ENCODE measurements at regions of chr4 and their contacts with region 1.

Region 1: DNA sequence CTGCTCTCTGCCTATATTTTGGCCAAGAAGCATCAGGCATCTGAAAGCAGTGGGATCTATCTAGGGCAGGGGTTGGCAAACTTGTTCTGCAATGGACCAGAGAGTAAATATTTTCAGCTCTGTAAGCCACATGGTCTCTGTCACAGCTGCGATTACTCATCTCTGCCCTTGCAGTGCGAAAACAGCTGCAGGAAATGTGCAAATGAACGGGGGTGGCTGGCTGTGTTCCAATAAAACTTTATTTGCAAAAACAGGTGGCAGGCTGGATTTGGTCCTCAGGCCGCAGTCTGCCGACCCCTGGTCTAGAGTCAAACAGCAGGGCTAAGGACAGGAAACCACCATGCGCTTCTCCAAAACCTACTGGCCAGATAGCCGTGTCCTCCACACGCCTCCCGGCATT is 48.6 kb downstream of the ACOX3 start:
- DNase-seq: peak; percentile 89
- H3K4me3 ChIP-seq: peak overlapping the region; percentile 12
- H3K27ac ChIP-seq: peak overlapping the region; percentile 79
- H3K4me1 ChIP-seq: peaks cover 32% of the 10 kb centered on the region
- CTCF ChIP-seq: no peak

Region 2: DNA sequence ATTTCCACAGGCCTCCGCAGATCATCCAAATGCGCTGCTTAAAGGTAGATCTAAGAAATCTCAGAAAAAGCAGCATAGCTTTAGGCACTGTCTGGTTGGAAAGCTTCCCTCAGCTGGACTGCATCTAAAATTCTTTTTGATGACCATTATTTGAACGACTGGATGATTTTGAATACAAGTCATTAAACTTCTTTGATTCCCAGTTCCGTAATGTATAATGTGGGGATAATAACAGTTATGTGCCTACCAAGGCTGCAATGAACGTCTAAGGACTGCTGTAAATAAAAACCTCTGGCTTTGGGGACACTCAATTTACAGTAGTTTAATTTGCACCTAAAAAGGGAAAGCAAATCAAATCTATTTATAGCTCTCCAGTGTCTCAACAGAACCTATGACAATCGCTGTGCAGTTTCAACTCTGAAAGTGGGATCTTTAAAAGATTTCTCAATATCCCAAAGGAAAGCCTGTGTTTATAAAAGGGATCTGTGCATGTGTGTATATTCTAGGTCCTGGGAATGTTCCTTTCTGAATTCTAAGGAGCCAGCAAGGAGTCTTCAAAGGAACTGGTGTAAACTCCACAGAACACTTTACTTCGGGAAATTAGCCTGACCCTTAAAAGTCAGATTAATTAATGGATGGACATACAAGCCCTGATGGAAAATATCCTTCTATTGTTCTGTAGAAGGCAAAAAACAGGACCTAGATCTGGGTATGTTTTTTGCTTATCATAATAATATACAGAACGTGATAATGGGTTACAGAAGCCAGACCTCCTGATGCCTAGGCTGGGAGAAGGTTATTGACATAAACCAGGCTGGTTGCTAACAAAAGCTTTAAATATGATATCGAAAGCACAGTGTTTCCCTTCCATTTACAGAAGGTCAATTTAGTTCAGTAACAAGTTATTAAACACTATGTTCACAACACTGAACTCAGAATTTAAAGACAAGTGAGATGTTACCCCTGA is 505.7 kb before region 1 on chr4:
- CTCF ChIA-PET with region 1: no interaction called
- POLR2A ChIA-PET with region 1: no interaction called
- intact Hi-C with region 1: no loop called
- DNase-seq: no peak
- H3K4me3 ChIP-seq: no peak overlapping the region
- H3K27ac ChIP-seq: no peak overlapping the region
- H3K4me1 ChIP-seq: no peaks in the 10 kb centered on the region
- CTCF ChIP-seq: no peak

Region 3: GRCh38 chr4:8198906-8199593 is 192.9 kb before region 1 on chr4 and contains the start of gene SH3TC1:
- CTCF ChIA-PET with region 1: no interaction called
- POLR2A ChIA-PET with region 1: no interaction called
- intact Hi-C with region 1: loop called (anchors 1 kb)
- DNase-seq: peak; percentile 82
- H3K4me3 ChIP-seq: peak within 1 kb of the TSS; percentile 67
- H3K27ac ChIP-seq: peak within 1 kb of the TSS; percentile 51
- H3K4me1 ChIP-seq: peaks cover 53% of the 10 kb centered on the region
- CTCF ChIP-seq: no peak
- total RNA-seq, gene SH3TC1: 15.3 and 17.5 TPM in 2 replicates

Region 4: DNA sequence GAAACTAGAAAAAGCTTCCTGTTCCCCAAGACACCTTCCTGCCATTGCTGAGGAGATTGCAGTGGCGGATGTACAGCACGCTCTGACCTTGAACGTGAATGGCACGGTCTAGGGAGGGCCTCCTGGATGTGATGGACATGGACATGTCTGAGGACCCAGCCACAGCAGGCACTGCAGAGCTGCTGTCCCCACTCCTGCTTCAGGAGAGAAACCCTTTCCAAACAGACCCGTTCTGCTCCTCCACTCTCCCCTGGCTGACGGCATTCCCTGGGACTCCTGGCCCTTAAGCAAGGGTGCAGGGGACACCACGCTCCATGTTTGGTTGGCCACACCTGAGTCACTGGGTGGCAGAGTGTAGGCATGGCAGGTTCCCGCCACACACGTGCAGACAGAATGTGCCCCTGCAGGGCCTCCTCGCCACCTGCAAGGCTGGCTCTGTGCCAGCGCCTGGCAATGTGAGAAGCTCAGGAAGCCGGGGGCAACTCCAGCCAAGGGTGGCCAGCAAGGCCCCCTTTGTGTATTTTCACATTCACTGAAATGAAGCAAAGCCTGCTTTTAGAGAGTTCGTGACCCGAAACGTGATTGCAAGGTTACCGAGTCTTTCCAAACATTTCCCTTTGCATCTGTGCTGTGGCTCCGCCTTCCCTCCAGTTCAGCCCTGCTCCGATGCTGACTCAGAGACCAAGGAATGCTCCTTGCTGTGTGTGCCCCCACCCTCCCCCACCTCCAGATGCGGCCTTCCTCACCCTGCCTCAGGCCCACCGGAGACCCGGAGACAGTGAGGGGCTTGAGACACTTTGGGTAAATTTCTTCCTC is 76.3 kb before region 1 on chr4:
- CTCF ChIA-PET with region 1: interaction called, 3 read pairs
- POLR2A ChIA-PET with region 1: interaction called, 3 read pairs
- intact Hi-C with region 1: loop called (anchors 2 kb)
- DNase-seq: peak; percentile 66
- H3K4me3 ChIP-seq: no peak overlapping the region
- H3K27ac ChIP-seq: no peak overlapping the region
- H3K4me1 ChIP-seq: peaks cover 31% of the 10 kb centered on the region
- CTCF ChIP-seq: no peak

Region 5: GRCh38 chr4:8362483-8362882 is 29.5 kb before region 1 on chr4:
- CTCF ChIA-PET with region 1: no interaction called
- POLR2A ChIA-PET with region 1: interaction called, 11 read pairs
- intact Hi-C with region 1: no loop called
- DNase-seq: no peak
- H3K4me3 ChIP-seq: no peak overlapping the region
- H3K27ac ChIP-seq: no peak overlapping the region
- H3K4me1 ChIP-seq: no peaks in the 10 kb centered on the region
- CTCF ChIP-seq: no peak

Region 6: GRCh38 chr4:8795774-8796495 is 404.0 kb after region 1 on chr4:
- CTCF ChIA-PET with region 1: no interaction called
- POLR2A ChIA-PET with region 1: no interaction called
- intact Hi-C with region 1: no loop called
- DNase-seq: no peak
- H3K4me3 ChIP-seq: no peak overlapping the region
- H3K27ac ChIP-seq: no peak overlapping the region
- H3K4me1 ChIP-seq: no peaks in the 10 kb centered on the region
- CTCF ChIP-seq: no peak

Measured in OCI-LY7 (cell line).